Caco-2 (cell line): ENCODE measurements at regions of chr4 and their contacts with region 1.

Region 1: GRCh38 chr4:54217642-54218495 is 11.2 kb upstream of the PDGFRA start:
- DNase-seq: peak; percentile 86 to 88
- H3K4me3 ChIP-seq: peak overlapping the region; percentile 38
- H3K4me3 Mint-ChIP-seq: peak overlapping the region; percentile 78
- H3K27ac Mint-ChIP-seq: peak overlapping the region; percentile 85
- H3K4me1 ChIP-seq: peaks cover 53% of the 10 kb centered on the region
- H3K4me1 Mint-ChIP-seq: peaks cover 23% of the 10 kb centered on the region
- H3K27me3 ChIP-seq: no peaks in the 10 kb centered on the region
- H3K27me3 Mint-ChIP-seq: no peaks in the 10 kb centered on the region
- CTCF ChIP-seq: peak; percentile 76 to 78

Region 2: GRCh38 chr4:53777244-53777984 is 440.5 kb before region 1 on chr4:
- CTCF ChIA-PET with region 1: no interaction called
- POLR2A ChIA-PET with region 1: no interaction called
- intact Hi-C with region 1: loop called (anchors 5 kb)
- DNase-seq: no peak
- H3K4me3 ChIP-seq: no peak overlapping the region
- H3K4me3 Mint-ChIP-seq: peak overlapping the region; percentile 50
- H3K27ac Mint-ChIP-seq: no peak overlapping the region
- H3K4me1 ChIP-seq: peaks cover 48% of the 10 kb centered on the region
- H3K4me1 Mint-ChIP-seq: peaks cover 27% of the 10 kb centered on the region
- H3K27me3 ChIP-seq: no peaks in the 10 kb centered on the region
- H3K27me3 Mint-ChIP-seq: no peaks in the 10 kb centered on the region
- CTCF ChIP-seq: no peak

Region 3: GRCh38 chr4:53997901-53998300 is 220.0 kb before region 1 on chr4:
- CTCF ChIA-PET with region 1: no interaction called
- POLR2A ChIA-PET with region 1: no interaction called
- intact Hi-C with region 1: no loop called
- DNase-seq: no peak
- H3K4me3 ChIP-seq: no peak overlapping the region
- H3K4me3 Mint-ChIP-seq: no peak overlapping the region
- H3K27ac Mint-ChIP-seq: no peak overlapping the region
- H3K4me1 ChIP-seq: peaks cover 7% of the 10 kb centered on the region
- H3K4me1 Mint-ChIP-seq: no peaks in the 10 kb centered on the region
- H3K27me3 ChIP-seq: no peaks in the 10 kb centered on the region
- H3K27me3 Mint-ChIP-seq: no peaks in the 10 kb centered on the region
- CTCF ChIP-seq: no peak

Region 4: DNA sequence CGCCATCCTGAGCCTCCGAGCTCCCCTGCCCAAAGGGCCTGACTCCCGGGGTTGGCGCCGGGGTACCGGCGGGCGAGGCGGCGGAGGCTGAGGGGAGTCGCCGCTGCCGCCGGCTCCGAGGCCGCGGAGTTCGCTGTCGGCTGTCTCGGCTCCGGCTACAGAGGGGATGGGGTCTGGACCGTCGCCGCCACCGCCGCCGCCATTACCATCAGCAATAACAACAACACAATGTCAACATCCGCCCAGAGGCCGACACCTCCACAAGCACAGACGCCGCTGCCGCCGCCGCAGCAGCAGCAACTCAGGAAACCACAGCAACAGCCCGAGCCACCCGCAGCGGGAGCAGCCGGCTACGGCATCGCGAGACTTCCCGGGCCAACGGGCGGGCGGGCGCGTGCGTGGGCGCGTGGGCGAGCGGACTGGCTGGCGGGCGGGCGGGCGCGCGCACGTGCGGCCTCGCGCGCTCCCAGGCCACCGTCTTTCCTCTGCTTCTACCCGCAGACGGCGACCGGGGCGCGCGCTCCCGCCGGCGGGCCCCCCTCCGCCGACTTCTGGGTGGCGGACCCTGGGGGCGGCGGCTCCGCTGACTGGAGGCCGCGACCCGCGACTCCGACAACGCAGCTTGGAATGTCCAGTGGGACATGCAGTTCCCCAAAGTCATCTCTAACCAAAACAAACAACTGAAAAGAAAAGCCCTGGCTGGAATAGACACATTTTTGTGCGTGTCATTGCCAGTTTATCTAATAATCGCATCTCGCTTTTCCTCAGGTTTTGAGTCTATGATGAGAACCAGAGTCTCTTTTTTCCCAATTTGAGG is 153.4 kb before region 1 on chr4 and contains the start of gene CHIC2:
- CTCF ChIA-PET with region 1: interaction called, 5 read pairs
- POLR2A ChIA-PET with region 1: no interaction called
- intact Hi-C with region 1: loop called (anchors 1 kb)
- DNase-seq: peak; percentile 94 to 96
- H3K4me3 ChIP-seq: peak within 1 kb of the TSS; percentile 92
- H3K4me3 Mint-ChIP-seq: peak within 1 kb of the TSS; percentile 89
- H3K27ac Mint-ChIP-seq: peak within 1 kb of the TSS; percentile 20
- H3K4me1 ChIP-seq: peaks cover 25% of the 10 kb centered on the region
- H3K4me1 Mint-ChIP-seq: peaks cover 40% of the 10 kb centered on the region
- H3K27me3 ChIP-seq: no peaks in the 10 kb centered on the region
- H3K27me3 Mint-ChIP-seq: no peaks in the 10 kb centered on the region
- CTCF ChIP-seq: no peak
- total RNA-seq, gene CHIC2: 24.9 and 30.0 TPM in 2 replicates

Region 5: GRCh38 chr4:54144199-54144598 is 73.7 kb before region 1 on chr4:
- CTCF ChIA-PET with region 1: no interaction called
- POLR2A ChIA-PET with region 1: no interaction called
- intact Hi-C with region 1: loop called (anchors 1 kb)
- DNase-seq: no peak
- H3K4me3 ChIP-seq: no peak overlapping the region
- H3K4me3 Mint-ChIP-seq: no peak overlapping the region
- H3K27ac Mint-ChIP-seq: no peak overlapping the region
- H3K4me1 ChIP-seq: peaks cover 8% of the 10 kb centered on the region
- H3K4me1 Mint-ChIP-seq: peaks cover 16% of the 10 kb centered on the region
- H3K27me3 ChIP-seq: no peaks in the 10 kb centered on the region
- H3K27me3 Mint-ChIP-seq: no peaks in the 10 kb centered on the region
- CTCF ChIP-seq: no peak

Region 6: DNA sequence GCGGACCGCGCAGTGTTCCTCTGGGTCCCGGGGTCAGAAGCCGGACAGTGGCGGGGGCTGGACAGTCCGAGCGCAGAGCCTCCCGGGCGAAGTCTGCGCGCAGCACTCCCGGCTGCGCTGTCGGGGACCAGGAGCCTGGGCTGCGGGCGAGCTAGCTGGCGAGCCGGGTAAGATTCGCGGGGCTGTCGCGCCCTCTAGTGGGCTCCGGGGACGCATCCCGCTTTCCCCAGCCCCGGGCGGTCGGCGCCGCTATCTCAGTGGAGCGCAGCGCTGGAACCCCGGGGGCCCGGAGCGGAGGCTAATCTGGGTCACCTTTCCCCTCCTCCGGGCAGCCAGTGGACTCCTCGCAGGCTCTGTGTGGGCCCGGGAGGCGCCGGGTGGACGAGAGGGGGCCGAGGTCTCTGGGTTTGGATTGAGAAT is 15.4 kb after region 1 on chr4:
- CTCF ChIA-PET with region 1: interaction called, 14 read pairs
- POLR2A ChIA-PET with region 1: no interaction called
- intact Hi-C with region 1: loop called (anchors 2 kb)
- DNase-seq: peak; percentile 80 to 87
- H3K4me3 ChIP-seq: peak overlapping the region; percentile 75
- H3K4me3 Mint-ChIP-seq: peak overlapping the region; percentile 87
- H3K27ac Mint-ChIP-seq: no peak overlapping the region
- H3K4me1 ChIP-seq: peaks cover 6% of the 10 kb centered on the region
- H3K4me1 Mint-ChIP-seq: peaks cover 9% of the 10 kb centered on the region
- H3K27me3 ChIP-seq: no peaks in the 10 kb centered on the region
- H3K27me3 Mint-ChIP-seq: no peaks in the 10 kb centered on the region
- CTCF ChIP-seq: peak in 1 of 2 experiments; percentile 77

Region 7: DNA sequence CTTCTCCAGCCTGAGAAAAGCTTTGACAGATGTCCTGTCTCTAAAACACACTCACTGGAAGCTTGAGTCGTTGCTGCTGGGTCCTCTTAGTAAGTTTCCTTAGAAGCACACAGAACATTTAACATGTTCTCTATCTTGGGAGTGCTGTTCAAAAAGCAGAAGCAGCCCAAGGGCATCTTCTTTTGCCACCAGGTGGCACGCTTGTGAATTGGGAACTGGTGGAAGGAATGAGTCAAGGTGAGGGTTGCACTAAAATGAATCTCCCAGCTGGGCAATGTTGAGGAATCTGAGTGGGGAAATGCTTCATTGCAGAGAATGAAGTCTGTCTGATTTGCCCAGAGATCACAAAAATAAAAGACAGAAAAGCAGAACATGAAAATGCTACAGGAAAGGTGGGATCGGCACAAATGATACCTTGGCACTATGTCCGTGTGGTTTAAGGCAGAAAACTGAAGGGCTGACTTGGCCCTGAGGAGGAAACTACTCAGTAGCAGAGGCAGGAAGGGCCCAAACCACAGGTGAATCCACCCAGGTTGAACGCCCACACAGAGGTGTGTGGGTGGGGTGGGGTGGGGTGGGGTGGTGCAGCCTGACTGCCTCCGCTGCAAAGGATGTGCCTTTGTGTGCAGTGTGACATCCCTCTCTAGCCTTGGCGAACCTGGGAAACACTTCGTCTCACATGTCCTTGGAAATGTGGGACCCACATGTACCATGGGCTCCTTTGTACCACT is 465.9 kb after region 1 on chr4:
- CTCF ChIA-PET with region 1: no interaction called
- POLR2A ChIA-PET with region 1: no interaction called
- intact Hi-C with region 1: no loop called
- DNase-seq: peak in 1 of 2 experiments; percentile 33
- H3K4me3 ChIP-seq: no peak overlapping the region
- H3K4me3 Mint-ChIP-seq: no peak overlapping the region
- H3K27ac Mint-ChIP-seq: no peak overlapping the region
- H3K4me1 ChIP-seq: no peaks in the 10 kb centered on the region
- H3K4me1 Mint-ChIP-seq: no peaks in the 10 kb centered on the region
- H3K27me3 ChIP-seq: no peaks in the 10 kb centered on the region
- H3K27me3 Mint-ChIP-seq: no peaks in the 10 kb centered on the region
- CTCF ChIP-seq: peak in 1 of 2 experiments; percentile 37